ENCODE measurements at regions of chr2 and their contacts with region 1.

Region 1: GRCh38 chr2:171042253-171042969 is 113.4 kb downstream of the GORASP2 start:
- DNase-seq: no peak
- H3K4me3 Mint-ChIP-seq: peak overlapping the region; percentile 10
- H3K27ac Mint-ChIP-seq: peak overlapping the region; percentile 79
- H3K4me1 Mint-ChIP-seq: peaks cover 27% of the 10 kb centered on the region
- H3K27me3 Mint-ChIP-seq: no peaks in the 10 kb centered on the region

Region 2: DNA sequence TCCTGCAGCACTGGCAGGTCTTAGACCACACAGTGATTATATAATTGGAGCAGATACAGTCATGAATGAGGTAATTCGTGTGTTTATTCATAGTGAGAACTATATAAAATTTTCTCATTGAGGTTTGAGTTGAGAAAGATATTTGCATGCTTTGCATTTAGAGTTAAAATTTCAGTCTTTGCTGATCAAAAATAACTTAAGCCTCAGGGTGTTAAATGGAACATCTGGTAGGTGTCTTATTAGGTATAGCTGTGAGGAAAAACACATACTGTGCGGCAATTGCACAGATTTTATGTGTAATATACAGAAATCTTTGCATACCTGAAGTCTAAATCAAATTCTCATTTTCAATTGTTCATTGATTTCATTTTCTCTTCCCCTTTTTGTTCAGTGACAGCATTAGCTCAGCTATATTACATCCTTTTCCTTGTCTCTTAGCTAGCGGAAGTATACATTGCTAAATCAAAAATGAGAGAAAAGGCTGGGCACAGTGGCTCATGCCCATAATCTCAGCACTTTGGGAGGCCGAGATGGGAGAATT is 92.1 kb before region 1 on chr2:
- intact Hi-C with region 1: no loop called
- DNase-seq: no peak
- H3K4me3 Mint-ChIP-seq: no peak overlapping the region
- H3K27ac Mint-ChIP-seq: no peak overlapping the region
- H3K4me1 Mint-ChIP-seq: peaks cover 9% of the 10 kb centered on the region
- H3K27me3 Mint-ChIP-seq: no peaks in the 10 kb centered on the region

Region 3: DNA sequence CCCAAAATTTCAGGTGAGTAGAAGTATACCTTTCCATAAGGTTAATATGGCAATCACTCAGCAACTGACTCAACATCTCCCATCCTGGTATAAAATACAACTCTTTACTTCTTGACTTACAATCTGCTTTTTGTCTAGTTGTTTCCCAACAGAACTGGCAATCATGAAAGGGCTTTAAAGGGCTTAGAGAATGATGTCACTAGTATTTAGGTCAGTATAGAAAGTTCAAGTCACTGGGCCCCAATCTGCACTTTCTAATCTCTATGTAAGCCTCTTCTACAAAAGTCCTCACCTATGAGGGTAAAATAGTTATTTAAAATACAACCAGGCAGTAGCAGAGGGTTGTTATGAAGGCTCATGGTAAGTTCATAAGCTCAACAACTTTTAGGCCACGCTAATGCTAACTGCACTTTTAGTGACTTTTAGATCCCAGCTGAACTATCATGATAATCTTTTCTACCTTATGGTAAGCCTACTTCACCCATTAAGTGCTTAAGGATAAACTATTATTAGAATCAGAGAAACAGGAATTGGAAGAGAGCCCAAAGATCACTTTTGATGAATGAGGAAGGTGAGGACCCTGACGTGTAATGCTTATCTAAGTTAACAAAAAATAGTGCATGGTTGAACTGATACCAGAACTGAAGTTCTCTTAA is 33.7 kb before region 1 on chr2:
- intact Hi-C with region 1: loop called (anchors 5 kb)
- DNase-seq: no peak
- H3K4me3 Mint-ChIP-seq: no peak overlapping the region
- H3K27ac Mint-ChIP-seq: peak overlapping the region; percentile 7
- H3K4me1 Mint-ChIP-seq: peaks cover 20% of the 10 kb centered on the region
- H3K27me3 Mint-ChIP-seq: no peaks in the 10 kb centered on the region

Region 4: DNA sequence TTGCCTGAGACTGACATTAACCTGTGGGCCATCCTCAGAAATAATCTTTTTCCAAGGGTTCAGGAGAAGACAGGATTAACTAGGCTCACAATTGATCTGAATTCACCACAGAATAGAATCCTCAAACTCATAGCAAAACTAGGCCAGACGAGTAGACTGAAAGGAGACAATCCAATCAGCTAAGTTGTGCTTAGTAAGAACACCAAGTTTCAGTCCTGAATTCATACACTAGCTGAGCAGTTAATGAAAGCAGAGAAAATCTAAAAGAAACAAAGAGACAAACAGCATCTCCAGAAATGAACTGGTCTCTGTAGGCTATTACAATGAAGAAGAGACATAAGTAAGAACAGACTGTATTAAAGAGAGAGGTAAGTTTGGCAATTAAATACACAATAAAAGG is 23.9 kb before region 1 on chr2:
- intact Hi-C with region 1: loop called (anchors 2 kb)
- DNase-seq: no peak
- H3K4me3 Mint-ChIP-seq: no peak overlapping the region
- H3K27ac Mint-ChIP-seq: peak overlapping the region; percentile 69
- H3K4me1 Mint-ChIP-seq: peaks cover 27% of the 10 kb centered on the region
- H3K27me3 Mint-ChIP-seq: no peaks in the 10 kb centered on the region